Caco-2 (cell line): ENCODE measurements at regions of chr7 and their contacts with region 1.

Region 1: GRCh38 chr7:28575241-28575643 is 162.9 kb downstream of the CREB5 start:
- DNase-seq: no peak
- H3K4me3 ChIP-seq: no peak overlapping the region
- H3K4me3 Mint-ChIP-seq: no peak overlapping the region
- H3K27ac Mint-ChIP-seq: no peak overlapping the region
- H3K4me1 ChIP-seq: 0 out of 2 replicates have a peak, but pooled peaks cover 9% of the 10 kb centered on the region
- H3K4me1 Mint-ChIP-seq: peaks cover 17% of the 10 kb centered on the region
- H3K27me3 ChIP-seq: no peaks in the 10 kb centered on the region
- H3K27me3 Mint-ChIP-seq: no peaks in the 10 kb centered on the region
- CTCF ChIP-seq: no peak

Region 2: DNA sequence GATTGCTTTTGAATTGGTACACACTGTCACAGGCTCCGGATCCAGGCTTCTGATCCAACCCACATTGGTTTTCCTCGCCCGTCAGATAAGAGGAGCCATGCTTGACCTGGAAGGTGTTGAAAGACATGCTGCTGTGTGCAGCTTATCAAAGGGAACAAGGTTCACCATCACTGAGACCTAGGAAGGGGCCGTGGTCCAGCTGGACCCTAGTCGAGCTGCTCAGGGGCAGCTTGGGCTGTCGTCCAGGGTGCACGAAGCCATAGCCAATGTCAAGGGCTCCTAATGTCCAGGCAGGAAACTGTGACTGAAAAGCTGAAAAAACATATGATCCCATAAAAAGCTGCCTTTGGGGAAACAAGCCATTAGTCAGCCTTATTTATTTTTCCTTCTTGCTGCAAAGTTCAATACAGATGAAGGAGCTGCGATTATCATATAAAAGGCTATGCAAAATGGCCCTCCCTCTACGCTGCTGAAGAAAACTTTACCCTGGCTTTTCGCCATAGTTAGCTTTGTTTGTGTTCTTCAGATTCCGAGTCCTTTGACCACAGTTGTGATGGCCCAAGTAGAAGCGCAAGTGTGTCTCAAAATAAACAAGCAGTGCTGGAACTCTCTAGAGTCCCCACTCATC is 45.0 kb before region 1 on chr7:
- CTCF ChIA-PET with region 1: no interaction called
- POLR2A ChIA-PET with region 1: no interaction called
- intact Hi-C with region 1: no loop called
- DNase-seq: peak in 1 of 2 experiments; percentile 69
- H3K4me3 ChIP-seq: no peak overlapping the region
- H3K4me3 Mint-ChIP-seq: peak overlapping the region; percentile 27
- H3K27ac Mint-ChIP-seq: no peak overlapping the region
- H3K4me1 ChIP-seq: peaks cover 19% of the 10 kb centered on the region
- H3K4me1 Mint-ChIP-seq: peaks cover 22% of the 10 kb centered on the region
- H3K27me3 ChIP-seq: no peaks in the 10 kb centered on the region
- H3K27me3 Mint-ChIP-seq: no peaks in the 10 kb centered on the region
- CTCF ChIP-seq: no peak

Region 3: GRCh38 chr7:28542410-28542809 is 32.8 kb before region 1 on chr7:
- CTCF ChIA-PET with region 1: no interaction called
- POLR2A ChIA-PET with region 1: no interaction called
- intact Hi-C with region 1: loop called (anchors 5 kb)
- DNase-seq: no peak
- H3K4me3 ChIP-seq: no peak overlapping the region
- H3K4me3 Mint-ChIP-seq: no peak overlapping the region
- H3K27ac Mint-ChIP-seq: no peak overlapping the region
- H3K4me1 ChIP-seq: peaks cover 12% of the 10 kb centered on the region; the same call in 1 of the 2 replicates
- H3K4me1 Mint-ChIP-seq: peaks cover 15% of the 10 kb centered on the region
- H3K27me3 ChIP-seq: no peaks in the 10 kb centered on the region
- H3K27me3 Mint-ChIP-seq: no peaks in the 10 kb centered on the region
- CTCF ChIP-seq: no peak

Region 4: DNA sequence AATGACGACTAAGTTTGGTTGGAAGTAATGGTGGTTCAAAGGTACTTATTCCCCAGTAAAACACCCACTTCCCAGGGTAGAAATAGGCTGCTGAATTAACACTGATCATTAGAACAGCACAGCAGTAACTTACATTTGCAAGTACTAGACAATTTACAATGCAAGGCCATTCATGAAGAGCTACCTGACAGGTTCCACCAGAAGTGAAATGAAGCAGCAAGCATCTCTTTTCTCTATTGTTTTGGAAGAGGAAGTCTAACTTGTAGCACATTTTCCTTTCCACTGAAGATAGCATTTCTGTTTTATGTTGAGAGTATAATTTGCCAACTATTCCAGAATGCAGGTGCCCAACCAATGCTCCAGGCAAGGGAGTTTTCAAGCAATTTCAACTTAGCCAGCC is 17.0 kb before region 1 on chr7:
- CTCF ChIA-PET with region 1: no interaction called
- POLR2A ChIA-PET with region 1: no interaction called
- intact Hi-C with region 1: no loop called
- DNase-seq: no peak
- H3K4me3 ChIP-seq: no peak overlapping the region
- H3K4me3 Mint-ChIP-seq: no peak overlapping the region
- H3K27ac Mint-ChIP-seq: no peak overlapping the region
- H3K4me1 ChIP-seq: no peaks in the 10 kb centered on the region; the same call in 1 of the 2 replicates
- H3K4me1 Mint-ChIP-seq: peaks cover 5% of the 10 kb centered on the region
- H3K27me3 ChIP-seq: no peaks in the 10 kb centered on the region
- H3K27me3 Mint-ChIP-seq: no peaks in the 10 kb centered on the region
- CTCF ChIP-seq: no peak